Caco-2 (cell line): ENCODE measurements at regions of chr10 and their contacts with region 1.

Region 1: DNA sequence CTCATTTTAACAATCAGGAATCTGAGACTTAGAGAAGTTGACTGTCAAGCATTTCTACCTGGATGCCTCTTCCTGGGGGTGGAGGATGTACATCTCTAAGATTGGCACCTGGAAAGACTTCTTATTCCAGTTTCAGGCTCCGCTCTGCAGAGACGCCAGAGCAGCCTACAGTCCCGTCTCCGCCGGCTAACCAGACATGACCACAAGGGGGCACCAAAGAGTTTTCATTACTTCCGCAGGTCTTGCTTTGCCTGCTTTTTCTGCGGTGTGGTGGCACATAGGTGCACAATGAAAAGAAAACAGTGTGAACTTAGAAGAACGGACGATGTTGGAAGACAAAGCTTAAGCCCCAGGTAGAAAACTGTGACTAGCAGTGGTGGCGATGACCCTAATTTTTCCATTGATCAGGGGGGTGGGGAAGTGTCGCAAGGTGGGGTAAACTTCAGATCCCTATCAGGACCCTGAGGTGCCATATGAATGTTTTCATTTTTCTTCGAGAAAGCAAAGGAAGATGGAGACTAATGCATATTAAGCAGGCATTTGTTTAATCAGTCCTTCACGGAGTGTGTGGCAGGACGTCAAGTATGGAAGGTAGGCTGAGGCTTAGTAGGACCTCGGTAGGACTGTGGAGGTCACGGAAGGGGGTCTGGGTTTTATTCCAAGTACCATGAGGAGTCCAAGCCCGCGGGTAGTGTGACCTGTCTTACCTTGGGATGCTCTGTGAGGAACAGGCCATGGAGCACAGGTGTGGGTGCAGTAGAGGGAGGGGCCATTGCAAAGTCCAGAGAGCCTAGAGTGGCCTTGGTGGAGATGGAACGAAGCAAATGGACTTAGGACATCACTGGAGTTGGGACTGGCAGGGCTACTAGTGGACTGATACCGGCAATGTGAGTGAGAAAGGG is 60.1 kb upstream of the SORCS3 start:
- DNase-seq: peak; percentile 72 to 85
- H3K4me3 ChIP-seq: no peak overlapping the region
- H3K4me3 Mint-ChIP-seq: no peak overlapping the region
- H3K27ac Mint-ChIP-seq: no peak overlapping the region
- H3K4me1 ChIP-seq: no peaks in the 10 kb centered on the region
- H3K4me1 Mint-ChIP-seq: peaks cover 7% of the 10 kb centered on the region
- H3K27me3 ChIP-seq: no peaks in the 10 kb centered on the region; the same call in none of the 2 replicates
- H3K27me3 Mint-ChIP-seq: peaks cover 41% of the 10 kb centered on the region
- CTCF ChIP-seq: peak; percentile 87 to 90

Region 2: GRCh38 chr10:104406715-104407650 is 174.0 kb before region 1 on chr10:
- CTCF ChIA-PET with region 1: no interaction called
- POLR2A ChIA-PET with region 1: no interaction called
- intact Hi-C with region 1: loop called (anchors 2 kb)
- DNase-seq: peak in 1 of 2 experiments; percentile 9
- H3K4me3 ChIP-seq: no peak overlapping the region
- H3K4me3 Mint-ChIP-seq: no peak overlapping the region
- H3K27ac Mint-ChIP-seq: no peak overlapping the region
- H3K4me1 ChIP-seq: no peaks in the 10 kb centered on the region
- H3K4me1 Mint-ChIP-seq: no peaks in the 10 kb centered on the region
- H3K27me3 ChIP-seq: no peaks in the 10 kb centered on the region; the same call in 1 of the 2 replicates
- H3K27me3 Mint-ChIP-seq: peaks cover 29% of the 10 kb centered on the region
- CTCF ChIP-seq: peak; percentile 38 to 39

Region 3: DNA sequence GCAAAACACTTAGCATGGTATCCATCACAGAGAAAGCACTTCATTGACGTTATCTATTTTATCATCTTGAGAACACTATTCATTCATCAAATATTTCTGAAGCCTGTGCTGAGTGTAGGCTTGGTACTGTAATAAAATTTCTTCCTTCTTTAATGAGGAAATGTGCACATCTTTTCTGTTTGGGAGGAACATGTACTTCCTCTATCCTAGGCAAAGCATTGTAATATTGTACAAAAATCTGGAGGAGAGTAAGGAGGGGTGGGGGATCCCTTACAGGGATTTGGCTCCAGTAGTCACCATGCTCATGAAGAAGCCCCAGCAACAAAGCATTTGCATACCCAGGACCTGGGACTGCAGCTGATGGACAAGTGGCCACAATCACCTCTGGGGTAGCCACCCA is 20.1 kb after region 1 on chr10:
- CTCF ChIA-PET with region 1: no interaction called
- POLR2A ChIA-PET with region 1: no interaction called
- intact Hi-C with region 1: no loop called
- DNase-seq: no peak
- H3K4me3 ChIP-seq: no peak overlapping the region
- H3K4me3 Mint-ChIP-seq: no peak overlapping the region
- H3K27ac Mint-ChIP-seq: no peak overlapping the region
- H3K4me1 ChIP-seq: no peaks in the 10 kb centered on the region
- H3K4me1 Mint-ChIP-seq: no peaks in the 10 kb centered on the region
- H3K27me3 ChIP-seq: no peaks in the 10 kb centered on the region
- H3K27me3 Mint-ChIP-seq: peaks cover 12% of the 10 kb centered on the region
- CTCF ChIP-seq: no peak

Region 4: DNA sequence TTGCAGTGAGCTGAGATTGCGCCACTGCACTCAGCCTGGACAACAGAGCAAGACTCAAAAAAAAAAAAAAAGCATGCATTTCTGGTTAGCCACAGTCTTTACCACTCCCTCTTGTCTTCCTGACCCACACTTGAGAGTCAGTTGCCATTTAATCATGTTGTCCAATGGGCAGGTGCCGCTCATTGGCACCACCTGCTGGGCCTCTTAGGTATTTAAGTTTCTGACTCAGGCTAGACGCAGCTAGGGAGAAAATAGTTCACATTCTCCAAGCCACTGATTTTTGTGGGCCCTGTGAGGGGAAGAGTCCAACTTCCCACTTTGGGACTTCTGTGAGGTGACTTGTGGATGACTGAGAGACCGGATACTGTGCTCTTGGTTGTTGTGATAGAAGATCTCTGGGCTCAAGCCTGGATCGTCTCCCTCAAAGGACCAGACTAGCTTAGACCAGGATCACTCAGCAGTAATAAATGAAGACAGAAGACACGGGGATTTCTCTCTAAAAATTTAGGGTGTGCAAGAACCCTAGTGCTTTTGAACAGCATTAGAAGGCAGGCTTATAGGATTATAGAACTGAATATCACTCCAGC is 33.3 kb after region 1 on chr10:
- CTCF ChIA-PET with region 1: interaction called, 3 read pairs
- POLR2A ChIA-PET with region 1: no interaction called
- intact Hi-C with region 1: loop called (anchors 1 kb)
- DNase-seq: peak in 1 of 2 experiments; percentile 47
- H3K4me3 ChIP-seq: no peak overlapping the region
- H3K4me3 Mint-ChIP-seq: no peak overlapping the region
- H3K27ac Mint-ChIP-seq: no peak overlapping the region
- H3K4me1 ChIP-seq: no peaks in the 10 kb centered on the region
- H3K4me1 Mint-ChIP-seq: no peaks in the 10 kb centered on the region
- H3K27me3 ChIP-seq: no peaks in the 10 kb centered on the region
- H3K27me3 Mint-ChIP-seq: no peaks in the 10 kb centered on the region
- CTCF ChIP-seq: peak; percentile 36 to 66

Region 5: GRCh38 chr10:104622598-104623209 is 41.7 kb after region 1 on chr10:
- CTCF ChIA-PET with region 1: interaction called, 15 read pairs
- POLR2A ChIA-PET with region 1: no interaction called
- intact Hi-C with region 1: loop called (anchors 1 kb)
- DNase-seq: peak; percentile 59 to 71
- H3K4me3 ChIP-seq: no peak overlapping the region
- H3K4me3 Mint-ChIP-seq: no peak overlapping the region
- H3K27ac Mint-ChIP-seq: no peak overlapping the region
- H3K4me1 ChIP-seq: no peaks in the 10 kb centered on the region
- H3K4me1 Mint-ChIP-seq: no peaks in the 10 kb centered on the region
- H3K27me3 ChIP-seq: no peaks in the 10 kb centered on the region
- H3K27me3 Mint-ChIP-seq: peaks cover 23% of the 10 kb centered on the region
- CTCF ChIP-seq: peak; percentile 73 to 85

Region 6: DNA sequence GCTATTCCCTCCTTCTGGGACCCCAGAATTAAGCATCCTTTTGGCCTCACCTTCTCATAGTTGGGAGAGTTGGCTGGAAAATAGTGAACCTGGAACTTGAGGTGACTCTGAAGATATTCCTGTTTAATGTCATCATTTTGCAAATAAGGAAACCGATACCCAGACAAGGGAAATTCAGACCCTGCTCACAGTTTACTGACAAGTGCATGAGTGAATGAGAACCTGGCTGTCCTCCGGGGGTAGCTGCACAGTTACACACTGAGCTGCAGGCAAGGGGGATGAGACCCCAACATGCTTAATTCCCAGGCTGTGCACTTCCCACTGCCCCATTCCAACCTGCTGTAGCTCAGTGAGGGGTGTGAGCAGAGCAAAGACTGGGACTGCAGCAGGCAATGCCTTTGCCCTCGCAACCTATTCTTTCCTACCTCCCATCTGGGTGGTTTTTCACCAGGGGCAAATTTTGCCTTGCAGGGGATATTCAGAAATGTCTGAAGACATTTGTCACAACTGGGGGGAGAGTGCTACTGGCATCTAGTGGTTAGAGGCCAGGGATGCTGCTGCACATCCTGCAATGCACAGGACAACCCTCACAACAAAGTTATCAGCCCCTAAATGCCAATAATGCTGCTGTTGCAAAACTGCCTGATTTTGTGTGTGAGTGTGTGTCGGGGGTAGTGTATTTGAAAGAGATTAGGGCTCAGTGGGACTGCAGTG is 196.2 kb after region 1 on chr10:
- CTCF ChIA-PET with region 1: interaction called, 4 read pairs
- POLR2A ChIA-PET with region 1: no interaction called
- intact Hi-C with region 1: loop called (anchors 10 kb)
- DNase-seq: no peak
- H3K4me3 ChIP-seq: no peak overlapping the region
- H3K4me3 Mint-ChIP-seq: no peak overlapping the region
- H3K27ac Mint-ChIP-seq: no peak overlapping the region
- H3K4me1 ChIP-seq: no peaks in the 10 kb centered on the region
- H3K4me1 Mint-ChIP-seq: no peaks in the 10 kb centered on the region
- H3K27me3 ChIP-seq: no peaks in the 10 kb centered on the region
- H3K27me3 Mint-ChIP-seq: peaks cover 17% of the 10 kb centered on the region
- CTCF ChIP-seq: no peak

Region 7: GRCh38 chr10:104867966-104868598 is 287.1 kb after region 1 on chr10:
- CTCF ChIA-PET with region 1: no interaction called
- POLR2A ChIA-PET with region 1: no interaction called
- intact Hi-C with region 1: no loop called
- DNase-seq: no peak
- H3K4me3 ChIP-seq: no peak overlapping the region
- H3K4me3 Mint-ChIP-seq: no peak overlapping the region
- H3K27ac Mint-ChIP-seq: no peak overlapping the region
- H3K4me1 ChIP-seq: no peaks in the 10 kb centered on the region
- H3K4me1 Mint-ChIP-seq: no peaks in the 10 kb centered on the region
- H3K27me3 ChIP-seq: no peaks in the 10 kb centered on the region
- H3K27me3 Mint-ChIP-seq: no peaks in the 10 kb centered on the region
- CTCF ChIP-seq: no peak

Region 8: GRCh38 chr10:104925232-104925851 is 344.3 kb after region 1 on chr10:
- CTCF ChIA-PET with region 1: no interaction called
- POLR2A ChIA-PET with region 1: no interaction called
- intact Hi-C with region 1: loop called (anchors 2 kb)
- DNase-seq: peak; percentile 38 to 57
- H3K4me3 ChIP-seq: no peak overlapping the region
- H3K4me3 Mint-ChIP-seq: no peak overlapping the region
- H3K27ac Mint-ChIP-seq: no peak overlapping the region
- H3K4me1 ChIP-seq: no peaks in the 10 kb centered on the region
- H3K4me1 Mint-ChIP-seq: no peaks in the 10 kb centered on the region
- H3K27me3 ChIP-seq: no peaks in the 10 kb centered on the region
- H3K27me3 Mint-ChIP-seq: peaks cover 8% of the 10 kb centered on the region
- CTCF ChIP-seq: peak; percentile 46 to 75